PC-3 (cell line): ENCODE measurements at regions of chr10 and their contacts with region 1.

Region 1: DNA sequence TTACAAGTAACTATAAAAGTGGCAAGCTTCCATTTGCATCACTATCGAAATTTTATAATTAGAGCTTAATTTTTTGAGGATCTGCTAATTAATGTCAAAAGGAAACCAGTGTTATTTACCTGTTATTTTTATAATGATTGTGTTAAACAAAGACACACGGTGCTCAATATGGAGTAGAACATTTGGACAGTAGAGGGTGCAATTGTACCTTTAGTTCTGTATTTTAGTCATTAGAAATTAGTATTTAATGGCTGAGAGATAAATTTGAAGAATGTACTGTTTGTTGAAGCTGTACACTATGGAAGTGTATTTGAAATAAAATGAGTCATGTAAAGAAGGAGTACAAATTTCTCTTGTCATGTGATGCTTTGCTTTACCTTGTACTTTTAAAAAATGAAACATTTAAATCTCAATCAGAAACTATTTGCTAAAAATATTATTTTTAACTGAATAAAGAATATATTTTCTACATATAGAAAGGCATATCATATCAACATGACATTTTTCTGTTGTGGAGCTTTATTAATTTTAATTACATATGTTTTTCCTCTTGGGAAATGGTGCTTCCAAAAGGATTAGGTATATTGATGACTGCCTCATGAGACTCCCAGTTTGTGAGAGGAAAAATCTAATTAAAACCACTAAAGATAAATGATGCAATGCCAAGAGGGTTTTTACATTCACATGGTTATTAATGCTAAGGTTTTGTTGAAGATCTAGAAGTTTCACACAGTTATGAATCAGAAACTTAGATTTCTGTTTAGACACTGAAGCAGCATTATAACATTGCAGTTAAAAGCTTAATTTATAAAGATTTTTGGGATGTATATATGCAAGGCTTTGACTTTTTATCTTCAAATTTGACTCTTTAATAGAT is 10.4 kb upstream of the PRKG1 start:
- DNase-seq: peak; percentile 99
- ATAC-seq: peak; percentile 100
- H3K4me3 ChIP-seq: no peak overlapping the region
- H3K27ac ChIP-seq: no peak overlapping the region
- H3K4me1 ChIP-seq: no peaks in the 10 kb centered on the region
- H3K27me3 ChIP-seq: peaks cover 8% of the 10 kb centered on the region
- CTCF ChIP-seq: peak; percentile 100

Region 2: DNA sequence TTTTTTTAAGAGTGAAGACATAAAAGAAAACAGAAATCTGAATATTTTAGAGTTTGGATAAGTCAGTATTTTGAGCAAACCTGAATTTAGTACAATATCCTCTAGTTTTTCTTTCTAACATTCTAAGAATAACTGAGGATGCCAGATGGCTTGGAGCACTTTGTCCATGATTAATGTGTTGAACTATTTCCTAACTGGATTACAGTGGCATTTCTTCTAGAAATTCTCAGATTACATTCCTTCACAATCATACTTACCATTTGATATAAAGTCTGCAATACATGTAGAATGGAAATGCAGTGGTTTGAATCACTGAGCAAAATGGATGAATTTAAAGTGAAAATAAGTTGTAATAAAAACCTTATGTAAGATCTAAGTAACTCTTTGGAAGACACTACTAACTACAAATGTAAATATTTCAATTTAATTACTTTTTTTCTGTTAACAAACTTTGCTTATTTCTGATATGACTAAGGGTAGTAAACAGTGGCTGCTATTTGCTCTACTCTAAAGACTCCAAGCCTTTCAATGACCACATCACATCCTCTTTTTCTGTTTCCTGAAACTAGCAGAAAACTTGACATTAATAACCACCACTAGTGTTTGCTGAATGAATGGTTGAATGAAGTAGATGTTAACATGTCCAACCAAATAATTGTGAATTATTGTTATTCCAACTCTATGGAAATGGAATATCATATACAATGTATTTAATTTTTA is 113.2 kb after region 1 on chr10:
- CTCF ChIA-PET with region 1: no interaction called
- POLR2A ChIA-PET with region 1: no interaction called
- intact Hi-C with region 1: loop called (anchors 2 kb)
- DNase-seq: peak; percentile 72
- ATAC-seq: peak; percentile 95
- H3K4me3 ChIP-seq: no peak overlapping the region
- H3K27ac ChIP-seq: peak overlapping the region; percentile 9
- H3K4me1 ChIP-seq: peaks cover 14% of the 10 kb centered on the region
- H3K27me3 ChIP-seq: no peaks in the 10 kb centered on the region
- CTCF ChIP-seq: no peak

Region 3: DNA sequence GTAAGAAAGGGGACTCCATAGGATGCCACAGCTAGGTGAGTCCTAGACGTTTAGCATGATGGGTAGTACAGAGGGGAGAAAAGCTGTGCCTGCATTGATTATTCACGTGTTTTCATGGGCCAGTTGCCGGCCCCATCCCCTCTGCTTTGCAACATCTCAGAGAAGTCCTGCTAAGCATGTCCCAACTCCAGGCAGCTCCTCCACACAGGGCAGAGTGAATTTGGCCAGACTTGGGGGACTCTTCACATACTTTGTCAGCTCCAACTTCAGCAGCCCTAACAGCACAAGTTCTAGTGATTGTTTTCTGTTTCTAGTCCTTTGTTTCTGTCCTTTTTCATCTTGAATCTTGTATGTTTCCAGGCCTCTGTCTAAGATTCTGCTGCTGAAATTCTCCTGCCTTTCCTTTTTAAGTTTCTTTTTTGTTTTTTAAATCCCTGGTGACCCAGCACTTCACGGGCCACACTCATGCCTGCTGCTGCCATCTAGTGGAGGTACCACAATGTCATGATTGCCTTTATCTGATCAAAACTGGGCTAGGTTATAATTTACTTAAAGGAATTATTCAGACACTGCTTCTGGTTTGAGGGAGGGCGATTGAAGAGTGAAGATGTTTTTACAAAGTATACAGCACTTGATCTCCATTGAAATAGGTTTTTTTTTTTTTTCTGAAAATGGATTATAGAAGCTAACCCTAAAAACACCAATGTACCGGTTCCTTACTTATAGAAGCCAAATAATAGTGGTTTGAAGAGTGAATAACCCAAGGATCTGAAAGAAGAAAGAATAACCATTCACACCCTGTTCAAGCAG is 358.6 kb after region 1 on chr10:
- CTCF ChIA-PET with region 1: interaction called, 10 read pairs
- POLR2A ChIA-PET with region 1: no interaction called
- intact Hi-C with region 1: loop called (anchors 1 kb)
- DNase-seq: peak; percentile 95
- ATAC-seq: peak; percentile 95
- H3K4me3 ChIP-seq: no peak overlapping the region
- H3K27ac ChIP-seq: no peak overlapping the region
- H3K4me1 ChIP-seq: no peaks in the 10 kb centered on the region; the same call in 1 of the 2 replicates
- H3K27me3 ChIP-seq: no peaks in the 10 kb centered on the region
- CTCF ChIP-seq: peak; percentile 100

Region 4: GRCh38 chr10:51640120-51640819 is 576.4 kb after region 1 on chr10:
- CTCF ChIA-PET with region 1: no interaction called
- POLR2A ChIA-PET with region 1: no interaction called
- intact Hi-C with region 1: loop called (anchors 10 kb)
- DNase-seq: no peak
- ATAC-seq: no peak
- H3K4me3 ChIP-seq: no peak overlapping the region
- H3K27ac ChIP-seq: no peak overlapping the region
- H3K4me1 ChIP-seq: peaks cover 24% of the 10 kb centered on the region
- H3K27me3 ChIP-seq: no peaks in the 10 kb centered on the region
- CTCF ChIP-seq: no peak

Region 5: GRCh38 chr10:51804866-51805265 is 741.0 kb after region 1 on chr10:
- CTCF ChIA-PET with region 1: no interaction called
- POLR2A ChIA-PET with region 1: no interaction called
- intact Hi-C with region 1: loop called (anchors 10 kb)
- DNase-seq: peak; percentile 96
- ATAC-seq: peak; percentile 89
- H3K4me3 ChIP-seq: no peak overlapping the region
- H3K27ac ChIP-seq: peak overlapping the region; percentile 79
- H3K4me1 ChIP-seq: peaks cover 31% of the 10 kb centered on the region
- H3K27me3 ChIP-seq: no peaks in the 10 kb centered on the region
- CTCF ChIP-seq: no peak

Region 6: DNA sequence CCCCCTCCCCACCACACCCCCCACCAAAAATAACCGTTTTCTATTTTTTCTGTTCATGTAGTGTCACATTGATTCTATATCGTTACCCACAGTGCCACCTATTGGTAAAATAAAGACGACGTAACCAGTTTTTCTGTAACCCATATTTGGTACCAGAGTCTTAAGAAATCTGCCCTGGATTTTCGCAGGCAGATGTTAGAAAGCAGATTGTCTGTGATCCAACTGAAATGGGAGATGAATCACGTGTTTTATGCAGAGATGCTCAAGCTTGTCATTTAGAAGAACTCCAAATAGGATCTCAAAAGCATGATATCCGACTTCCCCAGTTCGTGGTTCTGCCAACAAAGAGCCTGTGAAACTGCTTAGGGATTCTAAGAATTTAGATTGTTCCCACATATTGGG is 896.6 kb after region 1 on chr10:
- CTCF ChIA-PET with region 1: no interaction called
- POLR2A ChIA-PET with region 1: no interaction called
- intact Hi-C with region 1: loop called (anchors 1 kb)
- DNase-seq: peak; percentile 89
- ATAC-seq: peak; percentile 56
- H3K4me3 ChIP-seq: no peak overlapping the region
- H3K27ac ChIP-seq: no peak overlapping the region
- H3K4me1 ChIP-seq: peaks cover 16% of the 10 kb centered on the region
- H3K27me3 ChIP-seq: peaks cover 8% of the 10 kb centered on the region
- CTCF ChIP-seq: peak; percentile 94